ENCODE measurements at regions of chr1 and their contacts with region 1.

Region 1: GRCh38 chr1:28877132-28877781 is 37.1 kb upstream of the EPB41 start:
- DNase-seq: peak; percentile 47 to 79
- ATAC-seq: peak; percentile 80

Region 2: DNA sequence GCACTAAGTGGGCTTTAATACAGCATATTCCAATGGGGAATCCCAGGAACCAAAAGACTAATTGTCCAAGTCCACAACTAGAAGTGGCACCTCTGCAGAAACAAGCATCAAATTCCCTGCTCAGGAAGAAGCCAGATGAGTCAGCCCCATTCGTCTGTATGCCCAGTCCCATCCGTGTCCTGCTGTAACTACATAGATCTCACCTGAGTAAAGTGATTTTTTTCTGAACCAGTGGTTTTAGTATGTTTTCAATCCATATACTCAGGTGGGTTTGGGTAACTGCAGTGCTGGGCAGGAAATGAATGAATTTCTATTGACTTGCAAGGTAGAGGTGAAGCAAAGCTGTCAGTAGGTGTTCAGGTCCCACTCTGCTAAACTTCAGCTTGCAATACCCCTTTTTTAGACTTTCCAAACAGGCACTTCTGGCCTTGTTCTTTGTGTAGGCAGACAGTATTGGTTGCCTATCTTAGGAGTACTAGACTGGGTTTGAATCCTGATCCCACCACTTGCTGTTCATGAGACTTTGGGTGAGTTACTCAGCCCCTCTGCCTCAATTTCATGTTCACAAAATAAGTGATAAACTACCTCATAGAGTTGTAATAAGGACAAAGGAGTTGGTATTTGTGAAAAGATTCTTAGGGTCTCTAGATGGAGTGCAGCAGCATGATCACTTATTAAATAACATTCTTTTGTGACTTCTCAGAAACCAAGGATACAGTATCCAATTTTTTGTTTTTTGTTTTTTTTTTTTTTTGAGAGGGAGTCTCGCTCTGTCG is 366.4 kb before region 1 on chr1:
- intact Hi-C with region 1: loop called in 1 of 2 experiments (anchors 5 kb)
- DNase-seq: no peak
- ATAC-seq: no peak

Region 3: GRCh38 chr1:28779751-28780408 is 97.4 kb before region 1 on chr1:
- intact Hi-C with region 1: loop called (anchors 2 to 5 kb)
- DNase-seq: no peak
- ATAC-seq: no peak